Naive thymus-derived CD4-positive, alpha-beta T cell (primary cell): ENCODE measurements at regions of chr20 and their contacts with region 1.

Region 1: DNA sequence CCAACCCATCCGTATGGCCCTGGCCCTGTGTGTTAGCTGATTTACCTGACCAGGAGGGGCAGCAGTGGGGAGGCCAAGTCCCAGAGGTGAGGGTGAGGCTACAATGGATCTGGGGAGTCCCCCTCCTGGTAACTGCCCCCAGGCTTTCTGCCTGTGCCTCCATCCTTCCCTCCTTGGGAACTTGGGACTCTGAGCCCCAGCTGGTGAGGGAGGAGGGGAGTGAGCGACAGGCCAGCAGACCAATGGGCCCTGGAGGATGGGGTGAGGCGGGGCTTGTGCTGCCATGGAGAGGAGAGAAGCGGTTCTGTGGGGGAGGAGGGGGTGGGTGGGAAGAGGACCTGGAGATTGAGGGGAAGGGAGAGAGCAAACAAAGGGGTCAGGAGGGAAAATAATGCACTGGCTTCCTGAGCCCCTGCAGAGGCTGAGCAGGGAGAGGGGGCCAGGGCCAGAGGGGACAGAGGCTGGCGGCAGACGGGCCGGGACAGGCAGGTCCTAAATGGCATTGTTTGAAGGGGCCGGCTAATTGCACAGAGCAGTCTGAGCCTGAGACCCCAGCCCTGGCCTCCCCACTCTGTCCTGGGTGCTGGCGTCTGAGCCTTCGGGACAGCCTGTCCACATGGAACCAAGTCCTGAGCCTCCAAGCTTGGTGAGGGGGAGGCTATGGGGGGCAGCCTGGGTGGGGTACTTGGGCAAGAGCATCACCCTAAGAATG is 17.5 kb downstream of the DNMT3B start:
- DNase-seq: no peak
- ATAC-seq: no peak
- H3K4me3 ChIP-seq: no peak overlapping the region
- H3K4me3 Mint-ChIP-seq: no peak overlapping the region
- H3K27ac ChIP-seq: no peak overlapping the region
- H3K27ac Mint-ChIP-seq: no peak overlapping the region
- H3K4me1 ChIP-seq: no peaks in the 10 kb centered on the region
- H3K4me1 Mint-ChIP-seq: peaks cover 3 to 36% (median 32%) of the 10 kb centered on the region in 7 donors
- H3K27me3 ChIP-seq: no peaks in the 10 kb centered on the region
- H3K27me3 Mint-ChIP-seq: no peaks in the 10 kb centered on the region

Region 2: GRCh38 chr20:32521780-32522525 is 257.7 kb before region 1 on chr20:
- CTCF ChIA-PET with region 1: interaction called, 7 read pairs
- POLR2A ChIA-PET with region 1: no interaction called
- intact Hi-C with region 1: loop called in 1 of 2 experiments (anchors 1 kb)
- DNase-seq: peak; percentile 50 to 76 (median 63)
- ATAC-seq: peak; percentile 89
- H3K4me3 ChIP-seq: peak overlapping the region; percentile 27
- H3K4me3 Mint-ChIP-seq: peak overlapping the region in 9 of 10 donors; percentile 17 to 72 (median 53)
- H3K27ac ChIP-seq: peak overlapping the region; percentile 60
- H3K27ac Mint-ChIP-seq: peak overlapping the region; percentile 63 to 95 (median 90)
- H3K4me1 ChIP-seq: peaks cover 36 to 65% of the 10 kb centered on the region in 2 donors
- H3K4me1 Mint-ChIP-seq: peaks cover 39 to 77% (median 67%) of the 10 kb centered on the region in 7 donors
- H3K27me3 ChIP-seq: no peaks in the 10 kb centered on the region
- H3K27me3 Mint-ChIP-seq: no peaks in the 10 kb centered on the region

Region 3: DNA sequence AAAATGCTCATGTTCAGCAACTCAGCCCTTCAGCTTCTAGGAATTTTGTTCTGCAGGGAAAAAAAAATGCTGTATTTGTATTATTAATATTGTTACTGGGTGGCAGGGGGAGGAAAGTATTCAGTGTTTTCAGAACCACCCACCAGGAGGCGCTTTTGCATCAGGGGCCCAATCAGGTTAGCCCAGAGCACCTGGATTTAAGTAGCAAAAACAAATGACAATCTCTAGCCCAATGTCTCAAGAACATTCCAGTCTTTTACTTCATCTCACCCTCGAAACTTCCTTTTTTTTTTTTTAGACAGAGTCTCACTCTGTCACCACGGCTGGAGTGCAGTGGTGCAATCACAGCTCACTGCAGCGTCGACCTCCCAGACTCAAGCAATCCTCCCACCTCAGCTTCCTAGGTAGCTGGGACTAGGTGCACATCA is 105.3 kb before region 1 on chr20:
- CTCF ChIA-PET with region 1: interaction called, 143 read pairs
- POLR2A ChIA-PET with region 1: interaction called, 9 read pairs
- intact Hi-C with region 1: loop called in 1 of 2 experiments (anchors 1 kb)
- DNase-seq: peak; percentile 37 to 74 (median 65)
- ATAC-seq: peak; percentile 68
- H3K4me3 ChIP-seq: no peak overlapping the region
- H3K4me3 Mint-ChIP-seq: peak overlapping the region in 2 of 10 donors; percentile 21 to 38
- H3K27ac ChIP-seq: no peak overlapping the region
- H3K27ac Mint-ChIP-seq: peak overlapping the region in 3 of 9 donors; percentile 15 to 42 (median 29)
- H3K4me1 ChIP-seq: peaks cover 9 to 14% of the 10 kb centered on the region in 2 donors
- H3K4me1 Mint-ChIP-seq: peaks cover 6 to 40% (median 29%) of the 10 kb centered on the region in 7 donors
- H3K27me3 ChIP-seq: no peaks in the 10 kb centered on the region
- H3K27me3 Mint-ChIP-seq: peaks cover 0 to 5% (median 0%) of the 10 kb centered on the region in 5 donors

Region 4: DNA sequence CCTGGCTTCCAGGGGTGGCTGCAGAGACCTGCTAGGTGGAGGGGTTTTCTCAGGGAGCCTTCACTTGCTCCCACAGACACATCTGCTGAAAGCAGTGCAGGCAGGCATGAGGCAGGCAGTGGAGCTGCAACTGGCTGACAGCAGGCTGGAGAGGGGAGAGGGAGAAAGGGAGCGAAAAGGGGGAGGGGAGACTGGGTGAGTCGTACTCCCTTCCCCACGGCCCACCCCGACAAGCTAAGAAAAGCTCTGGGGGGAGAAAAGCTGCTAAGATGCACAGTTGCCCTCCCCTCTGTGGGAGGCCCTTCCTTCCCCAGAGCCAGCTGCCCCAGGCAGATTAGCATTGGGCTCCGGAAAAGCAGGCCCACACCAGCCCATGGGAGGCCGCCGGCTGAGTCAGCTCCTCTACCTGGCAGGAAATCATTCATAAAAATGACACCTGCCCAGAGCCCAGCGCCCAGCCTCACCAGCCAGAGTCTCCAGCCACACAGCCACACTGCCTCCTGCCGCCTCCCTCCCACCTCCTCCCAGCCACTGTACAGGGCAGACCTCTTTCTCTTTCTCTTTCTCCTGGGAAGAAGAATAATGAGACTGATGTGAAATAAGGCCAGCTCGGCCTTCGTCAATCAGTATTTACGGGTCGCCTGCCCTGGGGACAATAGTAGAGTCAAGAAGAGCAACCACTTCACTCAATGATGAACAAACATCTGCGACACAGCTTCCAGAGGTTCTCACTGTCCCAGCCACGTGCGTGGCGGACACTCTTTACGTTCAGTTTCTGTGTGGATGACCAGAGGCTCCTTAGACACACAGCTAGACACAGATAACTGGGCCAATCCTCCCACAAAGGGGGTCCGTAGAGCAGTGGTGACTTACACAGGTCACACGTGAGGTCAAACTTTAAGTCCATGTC is 98.2 kb before region 1 on chr20:
- CTCF ChIA-PET with region 1: interaction called, 143 read pairs
- POLR2A ChIA-PET with region 1: interaction called, 3 read pairs
- intact Hi-C with region 1: no loop called
- DNase-seq: no peak
- ATAC-seq: peak; percentile 45
- H3K4me3 ChIP-seq: no peak overlapping the region
- H3K4me3 Mint-ChIP-seq: no peak overlapping the region
- H3K27ac ChIP-seq: no peak overlapping the region
- H3K27ac Mint-ChIP-seq: peak overlapping the region in 3 of 9 donors; percentile 36 to 72 (median 37)
- H3K4me1 ChIP-seq: no peaks in the 10 kb centered on the region
- H3K4me1 Mint-ChIP-seq: peaks cover 3 to 14% (median 8%) of the 10 kb centered on the region in 7 donors
- H3K27me3 ChIP-seq: no peaks in the 10 kb centered on the region
- H3K27me3 Mint-ChIP-seq: no peaks in the 10 kb centered on the region

Region 5: DNA sequence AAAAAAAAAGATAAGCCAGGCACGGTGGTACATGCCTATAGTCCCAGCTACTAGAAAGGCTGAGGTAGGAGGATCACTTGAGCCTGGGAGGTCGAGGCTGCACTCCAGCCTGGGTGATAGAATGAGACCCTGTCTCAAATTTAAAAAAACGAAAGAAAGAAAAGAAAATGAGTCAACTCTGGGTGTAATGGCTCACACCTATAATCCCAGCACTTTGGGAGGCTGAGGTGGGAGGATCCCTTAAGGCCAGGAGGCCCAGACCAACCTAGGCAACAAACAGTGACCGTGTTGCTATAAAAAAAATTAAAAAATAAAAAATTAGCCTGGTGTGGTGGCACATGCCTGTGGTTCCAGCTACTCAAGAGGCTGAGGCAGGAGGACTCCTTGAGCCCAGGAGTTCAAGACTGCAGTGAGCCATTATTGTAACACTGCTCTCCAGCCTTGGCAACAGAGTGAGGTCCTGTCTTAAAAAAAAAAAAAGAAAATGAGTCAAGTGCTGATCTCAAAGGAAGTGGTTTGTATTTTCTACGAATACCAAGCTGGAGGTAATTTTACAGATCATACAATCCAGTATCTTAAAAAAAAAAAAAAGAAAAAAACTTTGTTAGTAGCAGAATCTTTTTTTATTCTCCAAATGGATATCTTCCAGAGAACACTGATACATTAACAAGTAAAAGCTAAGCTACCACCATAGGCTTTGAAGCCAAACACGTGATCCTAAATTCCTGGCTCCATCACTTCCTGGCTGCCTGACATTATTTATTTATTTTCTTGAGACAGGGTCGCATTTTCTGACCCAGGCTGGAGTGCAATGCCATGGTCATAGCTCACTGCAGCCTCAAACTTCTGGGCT is 42.1 kb before region 1 on chr20:
- CTCF ChIA-PET with region 1: interaction called, 10 read pairs
- POLR2A ChIA-PET with region 1: no interaction called
- intact Hi-C with region 1: loop called in 1 of 2 experiments (anchors 5 kb)
- DNase-seq: peak in 8 of 9 donors; percentile 33 to 78 (median 64)
- ATAC-seq: peak; percentile 88
- H3K4me3 ChIP-seq: peak overlapping the region; percentile 47
- H3K4me3 Mint-ChIP-seq: peak overlapping the region; percentile 50 to 78 (median 62)
- H3K27ac ChIP-seq: peak overlapping the region; percentile 75
- H3K27ac Mint-ChIP-seq: peak overlapping the region; percentile 82 to 95 (median 91)
- H3K4me1 ChIP-seq: peaks cover 36 to 37% of the 10 kb centered on the region in 2 donors
- H3K4me1 Mint-ChIP-seq: peaks cover 13 to 65% (median 52%) of the 10 kb centered on the region in 7 donors
- H3K27me3 ChIP-seq: no peaks in the 10 kb centered on the region
- H3K27me3 Mint-ChIP-seq: no peaks in the 10 kb centered on the region

Region 6: GRCh38 chr20:32743237-32744112 is 36.2 kb before region 1 on chr20 and contains the start of gene COMMD7:
- CTCF ChIA-PET with region 1: interaction called, 10 read pairs
- POLR2A ChIA-PET with region 1: interaction called, 5 read pairs
- intact Hi-C with region 1: loop called in 1 of 2 experiments (anchors 5 kb)
- DNase-seq: peak; percentile 48 to 72 (median 63)
- ATAC-seq: peak; percentile 83
- H3K4me3 ChIP-seq: peak within 1 kb of the TSS; percentile 96
- H3K4me3 Mint-ChIP-seq: peak within 1 kb of the TSS; percentile 93 to 100 (median 96)
- H3K27ac ChIP-seq: peak within 1 kb of the TSS; percentile 86
- H3K27ac Mint-ChIP-seq: peak within 1 kb of the TSS; percentile 93 to 98 (median 97)
- H3K4me1 ChIP-seq: peaks cover 18% of the 10 kb centered on the region in 2 donors
- H3K4me1 Mint-ChIP-seq: peaks cover 6 to 52% (median 35%) of the 10 kb centered on the region in 7 donors
- H3K27me3 ChIP-seq: no peaks in the 10 kb centered on the region
- H3K27me3 Mint-ChIP-seq: no peaks in the 10 kb centered on the region
- total RNA-seq, gene COMMD7: 31.5 to 66.3 (median 40.3) TPM

Region 7: DNA sequence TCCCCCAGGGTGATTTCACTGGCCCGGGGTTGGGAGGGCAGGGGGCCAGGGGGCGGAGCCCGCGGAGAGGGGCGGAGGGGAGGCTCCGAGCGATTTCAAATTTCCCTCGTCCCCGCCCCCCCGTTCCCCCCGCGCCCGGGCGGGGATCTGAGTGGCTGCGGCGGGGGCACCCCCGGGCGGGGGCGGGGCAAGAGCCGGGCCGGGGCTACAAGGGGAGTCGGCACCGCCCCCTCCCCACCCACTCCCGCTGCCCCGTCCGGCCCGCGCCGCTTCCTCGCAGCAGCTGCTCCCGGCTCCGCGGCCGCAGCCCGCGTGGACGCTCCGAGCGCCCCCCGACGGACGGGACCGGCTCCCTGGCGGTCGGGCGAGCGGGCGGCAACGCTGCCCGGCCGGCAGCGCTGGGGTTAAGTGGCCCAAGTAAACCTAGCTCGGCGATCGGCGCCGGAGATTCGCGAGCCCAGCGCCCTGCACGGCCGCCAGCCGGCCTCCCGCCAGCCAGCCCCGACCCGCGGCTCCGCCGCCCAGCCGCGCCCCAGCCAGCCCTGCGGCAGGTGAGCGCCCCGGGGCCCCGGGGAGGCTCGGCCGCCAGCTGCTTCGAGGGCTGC is 17.4 kb before region 1 on chr20 and contains the start of gene DNMT3B:
- CTCF ChIA-PET with region 1: interaction called, 8 read pairs
- POLR2A ChIA-PET with region 1: interaction called, 3 read pairs
- intact Hi-C with region 1: loop called in 1 of 2 experiments (anchors 2 kb)
- DNase-seq: peak; percentile 41 to 80 (median 62)
- ATAC-seq: peak; percentile 89
- H3K4me3 ChIP-seq: peak within 1 kb of the TSS; percentile 59
- H3K4me3 Mint-ChIP-seq: peak within 1 kb of the TSS; percentile 85 to 94 (median 88)
- H3K27ac ChIP-seq: peak within 1 kb of the TSS; percentile 11
- H3K27ac Mint-ChIP-seq: peak within 1 kb of the TSS; percentile 4 to 94 (median 75)
- H3K4me1 ChIP-seq: peaks cover 0 to 11% of the 10 kb centered on the region in 2 donors
- H3K4me1 Mint-ChIP-seq: peaks cover 8 to 31% (median 23%) of the 10 kb centered on the region in 7 donors
- H3K27me3 ChIP-seq: no peaks in the 10 kb centered on the region
- H3K27me3 Mint-ChIP-seq: peaks cover 0 to 25% (median 0%) of the 10 kb centered on the region in 5 donors
- total RNA-seq, gene DNMT3B: 0.32 to 2.5 (median 0.66) TPM